Heart left ventricle (tissue), 16 donors: ENCODE measurements at regions of chr11 and their contacts with region 1.

Region 1: DNA sequence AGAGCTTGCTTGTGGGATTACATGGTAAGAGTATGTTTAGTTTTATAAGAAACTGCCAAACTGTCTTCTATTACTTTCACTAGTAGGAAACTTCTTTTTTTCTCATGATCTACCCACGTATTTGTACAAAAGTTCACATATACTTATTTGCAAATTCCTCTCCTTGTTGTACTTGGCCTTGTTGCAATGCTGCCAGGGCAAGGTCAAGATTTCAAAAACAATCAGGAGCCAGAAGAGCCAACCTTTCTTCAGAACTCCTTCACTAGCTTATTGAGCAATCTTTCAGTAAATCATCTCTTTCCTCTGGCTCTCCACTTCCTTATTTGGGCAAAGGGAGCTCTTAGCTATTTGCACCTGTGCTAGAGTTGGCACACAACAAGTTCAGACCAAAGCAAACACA is 9.7 kb downstream of the SRSF8 start:
- DNase-seq: no peak
- ATAC-seq: no peak
- H3K4me3 ChIP-seq: no peak overlapping the region
- H3K27ac ChIP-seq: peak overlapping the region in 1 of 12 donors; percentile 11
- H3K4me1 ChIP-seq: peaks cover 0 to 40% (median 13%) of the 10 kb centered on the region in 12 donors
- H3K27me3 ChIP-seq: no peaks in the 10 kb centered on the region
- CTCF ChIP-seq: no peak
- POLR2A ChIP-seq: no peak

Region 2: DNA sequence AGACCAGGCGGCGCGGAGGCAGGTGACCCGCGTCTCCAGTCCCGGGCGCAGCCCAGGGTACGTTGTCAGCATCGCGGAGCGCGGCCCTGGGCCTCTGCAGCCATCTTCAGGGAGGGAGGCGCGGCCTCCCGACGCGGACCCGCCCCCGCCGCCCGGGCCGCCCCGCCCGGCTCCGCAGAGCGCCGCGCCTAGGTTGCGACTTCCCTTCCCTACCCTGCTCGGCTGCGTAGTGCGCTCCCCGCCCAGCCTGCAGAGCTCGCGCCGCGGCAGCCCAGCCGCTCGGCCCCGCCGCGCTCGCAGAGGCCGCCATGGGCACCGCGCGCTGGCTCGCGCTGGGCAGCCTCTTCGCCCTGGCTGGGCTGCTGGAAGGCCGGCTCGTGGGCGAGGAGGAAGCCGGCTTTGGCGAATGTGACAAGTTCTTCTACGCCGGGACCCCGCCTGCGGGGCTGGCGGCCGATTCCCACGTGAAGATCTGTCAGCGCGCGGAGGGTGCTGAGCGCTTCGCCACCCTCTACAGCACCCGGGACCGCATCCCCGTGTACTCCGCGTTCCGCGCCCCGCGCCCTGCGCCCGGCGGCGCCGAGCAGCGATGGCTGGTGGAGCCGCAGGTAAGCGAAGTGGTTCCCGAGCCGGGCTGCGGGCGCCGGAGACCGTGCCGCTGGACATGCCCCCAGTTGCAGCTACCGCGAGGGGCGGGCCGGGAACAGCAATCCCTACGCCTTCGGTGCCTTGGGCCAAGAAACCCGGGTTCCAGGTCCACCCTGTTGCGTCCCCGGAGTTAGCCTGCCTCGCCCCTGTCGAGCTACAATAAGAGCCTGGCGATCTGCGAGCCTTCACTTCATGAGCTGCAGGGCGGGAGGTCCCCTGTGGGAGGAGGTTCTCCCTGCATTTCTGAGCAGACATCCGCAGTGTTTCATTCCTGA is 13.5 kb after region 1 on chr11 and contains the start of gene ENDOD1:
- intact Hi-C with region 1: loop called in 2 of 10 experiments (anchors 2 kb)
- DNase-seq: peak; percentile 88 to 94 (median 88)
- ATAC-seq: peak; percentile 94 to 99 (median 97)
- H3K4me3 ChIP-seq: peak within 1 kb of the TSS; percentile 77 to 96 (median 92)
- H3K27ac ChIP-seq: peak within 1 kb of the TSS; percentile 63 to 98 (median 93)
- H3K4me1 ChIP-seq: peaks cover 0 to 40% (median 22%) of the 10 kb centered on the region in 12 donors
- H3K27me3 ChIP-seq: no peaks in the 10 kb centered on the region
- CTCF ChIP-seq: peak in 3 of 12 donors; percentile 10 to 29 (median 10)
- POLR2A ChIP-seq: peak in 1 of 2 donors; percentile 73
- total RNA-seq, gene ENDOD1: 9.7 to 28.5 (median 12.9) TPM

Region 3: DNA sequence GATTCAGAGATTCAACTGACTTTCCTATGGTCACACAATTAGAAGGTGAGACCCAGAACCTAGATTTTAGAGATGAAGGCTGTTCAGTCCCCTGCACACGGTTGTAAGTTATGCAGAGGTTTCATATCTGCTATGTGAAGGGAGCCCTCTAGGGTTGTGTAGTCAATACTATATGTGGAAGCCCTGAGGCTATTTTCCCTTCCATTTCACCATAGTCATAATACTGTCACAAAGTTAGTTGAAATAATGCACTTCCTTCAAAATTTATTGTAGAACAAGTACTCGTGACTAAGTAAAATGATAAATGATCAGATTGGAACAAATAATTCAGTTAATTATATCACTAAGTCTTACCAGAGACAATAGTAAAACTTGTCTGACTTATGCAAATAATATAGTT is 62.0 kb after region 1 on chr11:
- intact Hi-C with region 1: loop called in 1 of 10 experiments (anchors 5 kb)
- DNase-seq: no peak
- ATAC-seq: peak in 2 of 4 donors; percentile 55 to 66
- H3K4me3 ChIP-seq: no peak overlapping the region
- H3K27ac ChIP-seq: no peak overlapping the region
- H3K4me1 ChIP-seq: peaks cover 0 to 12% (median 3%) of the 10 kb centered on the region in 12 donors
- H3K27me3 ChIP-seq: no peaks in the 10 kb centered on the region
- CTCF ChIP-seq: peak in 8 of 12 donors; percentile 8 to 43 (median 23)
- POLR2A ChIP-seq: no peak

Region 4: GRCh38 chr11:95335989-95336388 is 259.6 kb after region 1 on chr11:
- intact Hi-C with region 1: no loop called
- DNase-seq: no peak
- ATAC-seq: no peak
- H3K4me3 ChIP-seq: no peak overlapping the region
- H3K27ac ChIP-seq: peak overlapping the region in 1 of 12 donors; percentile 89
- H3K4me1 ChIP-seq: peaks cover 6 to 41% (median 32%) of the 10 kb centered on the region in 12 donors
- H3K27me3 ChIP-seq: no peaks in the 10 kb centered on the region
- CTCF ChIP-seq: no peak
- POLR2A ChIP-seq: no peak